ENCODE measurements at regions of chr5 and their contacts with region 1.

Region 1: GRCh38 chr5:139422307-139422893 is 16.9 kb downstream of the DNAJC18 start:
- DNase-seq: peak; percentile 79
- H3K4me3 ChIP-seq: no peak overlapping the region
- H3K27ac ChIP-seq: no peak overlapping the region
- H3K4me1 ChIP-seq: peaks cover 25% of the 10 kb centered on the region
- H3K27me3 ChIP-seq: no peaks in the 10 kb centered on the region
- CTCF ChIP-seq: peak; percentile 63 to 81
- POLR2A ChIP-seq: no peak

Region 2: DNA sequence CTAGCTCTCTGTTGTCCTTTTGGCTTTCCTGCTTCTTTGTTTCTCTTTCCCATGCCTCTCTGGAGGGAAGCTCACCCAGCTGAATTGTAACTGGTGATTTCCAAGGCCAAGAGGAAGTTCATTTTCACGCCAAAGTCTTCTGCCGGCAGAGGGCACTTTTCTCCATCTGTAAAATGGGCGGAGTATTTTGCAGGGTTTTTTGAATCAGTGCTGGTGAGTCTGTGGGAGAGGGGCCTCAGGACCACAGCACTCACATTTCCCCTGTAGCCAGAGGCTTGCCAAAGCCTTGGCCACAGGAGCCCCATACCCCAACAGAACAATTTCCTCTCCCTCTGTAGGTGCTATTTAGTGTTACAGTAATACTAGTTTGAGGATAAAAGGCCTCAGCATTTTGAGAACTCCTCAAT is 171.1 kb before region 1 on chr5:
- CTCF ChIA-PET with region 1: no interaction called
- POLR2A ChIA-PET with region 1: no interaction called
- dilution Hi-C with region 1: no loop called
- intact Hi-C with region 1: no loop called
- DNase-seq: peak; percentile 57
- H3K4me3 ChIP-seq: no peak overlapping the region
- H3K27ac ChIP-seq: no peak overlapping the region
- H3K4me1 ChIP-seq: peaks cover 10% of the 10 kb centered on the region
- H3K27me3 ChIP-seq: no peaks in the 10 kb centered on the region
- CTCF ChIP-seq: peak; percentile 28 to 36
- POLR2A ChIP-seq: no peak

Region 3: DNA sequence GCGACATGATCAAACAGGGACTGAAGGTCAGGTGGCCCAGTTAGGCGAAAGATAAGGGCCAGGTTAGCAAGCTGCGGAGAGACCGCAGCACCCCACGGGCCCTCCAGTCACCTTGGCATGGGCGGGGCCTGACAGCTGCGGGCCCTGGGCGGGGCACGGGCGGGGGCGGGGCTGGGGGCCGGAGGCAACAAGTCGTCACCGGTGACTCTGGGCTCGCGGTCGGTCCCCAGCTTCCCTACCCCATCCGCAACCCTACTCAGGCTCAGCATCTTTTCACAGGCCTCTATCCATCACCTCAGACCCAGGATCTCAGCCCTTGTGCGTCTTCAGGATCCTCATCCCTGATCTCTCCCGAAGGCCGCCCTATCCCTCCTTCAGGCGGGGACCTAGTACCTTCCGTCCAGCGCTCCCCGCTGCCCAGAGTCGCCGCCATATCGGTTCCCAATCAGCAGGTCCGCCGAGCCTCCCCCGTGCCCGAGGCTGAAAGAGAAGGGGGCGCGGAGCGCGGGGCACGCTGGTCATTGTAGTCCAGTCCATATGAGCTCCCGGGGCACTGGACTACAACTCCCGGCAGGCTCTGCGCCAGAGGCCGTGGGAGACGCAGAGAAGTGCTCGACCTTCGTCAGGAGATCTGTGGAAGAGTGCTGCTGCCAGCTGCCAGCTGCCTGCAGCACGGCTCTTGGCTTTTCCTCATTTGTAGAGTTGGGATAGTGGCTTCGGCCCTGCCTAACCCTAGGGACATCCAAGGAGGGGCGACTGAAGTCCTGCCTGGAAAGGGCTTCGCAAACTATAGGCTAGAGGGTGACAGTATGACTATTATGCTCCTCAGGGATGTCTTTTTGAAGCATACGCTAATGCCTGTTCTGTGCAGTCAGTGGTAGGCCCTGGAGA is 16.9 kb after region 1 on chr5 and contains the start of gene DNAJC18:
- CTCF ChIA-PET with region 1: interaction called, 16 read pairs
- POLR2A ChIA-PET with region 1: no interaction called
- dilution Hi-C with region 1: no loop called
- intact Hi-C with region 1: no loop called
- DNase-seq: peak; percentile 88
- H3K4me3 ChIP-seq: peak within 1 kb of the TSS; percentile 42 to 66 (median 54)
- H3K27ac ChIP-seq: peak within 1 kb of the TSS; percentile 83
- H3K4me1 ChIP-seq: peaks cover 29% of the 10 kb centered on the region
- H3K27me3 ChIP-seq: no peaks in the 10 kb centered on the region
- CTCF ChIP-seq: no peak
- POLR2A ChIP-seq: peak; percentile 49
- total RNA-seq, gene DNAJC18: 51.1 and 52.6 TPM in 2 replicates

Region 4: GRCh38 chr5:139482050-139482889 is 59.9 kb after region 1 on chr5 and contains the start of gene STING1:
- CTCF ChIA-PET with region 1: interaction called, 12 read pairs
- POLR2A ChIA-PET with region 1: no interaction called
- dilution Hi-C with region 1: no loop called
- intact Hi-C with region 1: no loop called
- DNase-seq: peak; percentile 90
- H3K4me3 ChIP-seq: peak within 1 kb of the TSS; percentile 4 to 67 (median 42)
- H3K27ac ChIP-seq: peak within 1 kb of the TSS; percentile 94
- H3K4me1 ChIP-seq: peaks cover 27% of the 10 kb centered on the region
- H3K27me3 ChIP-seq: no peaks in the 10 kb centered on the region
- CTCF ChIP-seq: no peak
- POLR2A ChIP-seq: peak; percentile 58
- total RNA-seq, gene STING1: 108 and 127 TPM in 2 replicates

Region 5: GRCh38 chr5:139492700-139493192 is 70.3 kb after region 1 on chr5:
- CTCF ChIA-PET with region 1: interaction called, 11 read pairs
- POLR2A ChIA-PET with region 1: no interaction called
- dilution Hi-C with region 1: no loop called
- intact Hi-C with region 1: no loop called
- DNase-seq: peak; percentile 31
- H3K4me3 ChIP-seq: no peak overlapping the region
- H3K27ac ChIP-seq: no peak overlapping the region
- H3K4me1 ChIP-seq: peaks cover 33% of the 10 kb centered on the region
- H3K27me3 ChIP-seq: no peaks in the 10 kb centered on the region
- CTCF ChIP-seq: no peak
- POLR2A ChIP-seq: no peak

Region 6: GRCh38 chr5:139560752-139561654 is 138.6 kb after region 1 on chr5 and contains the start of gene UBE2D2:
- CTCF ChIA-PET with region 1: interaction called, 8 read pairs
- POLR2A ChIA-PET with region 1: interaction called, 3 read pairs
- dilution Hi-C with region 1: no loop called
- intact Hi-C with region 1: loop called (anchors 1 kb)
- DNase-seq: peak; percentile 97
- H3K4me3 ChIP-seq: peak within 1 kb of the TSS; percentile 71 to 92 (median 85)
- H3K27ac ChIP-seq: peak within 1 kb of the TSS; percentile 82
- H3K4me1 ChIP-seq: peaks cover 31% of the 10 kb centered on the region
- H3K27me3 ChIP-seq: no peaks in the 10 kb centered on the region
- CTCF ChIP-seq: no peak
- POLR2A ChIP-seq: peak; percentile 89
- total RNA-seq, gene UBE2D2: 156 and 172 TPM in 2 replicates

Region 7: DNA sequence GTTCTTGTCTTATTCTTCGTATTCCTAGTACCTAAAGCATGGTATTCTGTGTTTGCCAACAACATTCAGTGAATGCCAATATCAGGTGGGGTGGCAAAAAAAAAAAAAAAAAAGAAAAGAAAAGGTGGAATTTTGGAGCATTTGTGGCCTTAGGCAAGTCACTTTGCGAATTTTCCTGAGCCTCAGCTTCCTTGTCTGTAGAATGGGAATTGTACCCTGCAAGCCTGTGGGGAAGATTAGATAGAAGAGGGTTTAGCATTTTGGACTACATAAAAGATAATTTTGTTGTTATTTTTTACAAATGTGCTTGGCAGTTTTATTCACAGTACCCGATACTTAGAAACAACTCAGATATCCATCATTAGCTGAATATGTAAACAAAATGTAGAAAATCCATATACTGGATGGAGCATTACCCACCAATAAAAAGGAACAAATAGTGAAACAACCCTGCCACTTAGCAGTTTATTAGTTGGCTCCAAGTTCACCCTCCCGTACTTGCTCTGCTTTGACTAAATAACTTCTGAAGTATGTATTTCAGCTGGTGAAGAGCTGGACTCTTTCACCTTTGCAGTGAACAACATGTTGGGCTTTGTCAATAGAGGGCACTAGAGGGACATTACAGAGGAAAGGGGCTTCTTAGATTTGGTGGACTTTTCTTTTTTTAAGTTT is 152.4 kb after region 1 on chr5:
- CTCF ChIA-PET with region 1: interaction called, 10 read pairs
- POLR2A ChIA-PET with region 1: no interaction called
- dilution Hi-C with region 1: no loop called
- intact Hi-C with region 1: no loop called
- DNase-seq: peak; percentile 58
- H3K4me3 ChIP-seq: no peak overlapping the region
- H3K27ac ChIP-seq: no peak overlapping the region
- H3K4me1 ChIP-seq: peaks cover 17% of the 10 kb centered on the region
- H3K27me3 ChIP-seq: no peaks in the 10 kb centered on the region
- CTCF ChIP-seq: peak; percentile 45 to 49
- POLR2A ChIP-seq: no peak